Thyroid gland (tissue), 4 donors: ENCODE measurements at regions of chr7 and their contacts with region 1.

Region 1: DNA sequence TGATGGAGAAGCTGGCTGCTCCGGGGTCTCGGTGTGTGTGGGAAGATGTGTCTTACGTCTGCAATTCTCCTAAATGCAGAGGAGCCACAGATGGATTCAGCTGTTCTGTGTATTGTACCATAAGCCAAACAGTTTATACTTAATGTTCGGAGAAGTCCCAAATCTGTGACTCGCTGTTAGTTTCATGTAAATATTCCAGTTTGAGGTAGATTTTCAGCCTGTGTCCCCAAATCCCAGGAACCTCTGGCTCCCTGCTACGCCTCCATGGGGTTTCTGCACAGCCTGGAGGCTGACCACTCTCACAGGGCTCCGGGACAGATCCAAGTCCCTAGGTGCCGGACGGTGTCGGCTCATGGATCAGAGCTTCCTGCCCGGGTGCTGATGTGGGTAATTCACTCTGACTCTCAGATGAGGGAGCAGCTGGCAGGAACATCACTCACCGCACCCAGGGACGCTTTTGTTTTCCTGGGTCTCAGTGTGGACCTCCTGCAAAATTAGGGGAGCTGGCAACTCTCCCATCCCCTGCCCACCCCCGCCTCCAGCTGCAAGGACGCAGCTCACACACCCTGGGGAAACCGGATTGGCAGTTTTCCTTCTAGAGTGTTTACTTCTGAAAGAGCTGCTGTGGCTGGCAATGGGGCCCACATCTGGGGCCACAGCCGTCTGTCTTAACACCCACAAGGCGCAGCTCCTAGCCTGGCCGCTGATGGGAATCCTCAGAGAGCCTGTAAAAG is 421.1 kb upstream of the FOXK1 start:
- DNase-seq: no peak
- H3K4me3 ChIP-seq: no peak overlapping the region
- H3K27ac ChIP-seq: no peak overlapping the region
- H3K4me1 ChIP-seq: no peaks in the 10 kb centered on the region
- H3K27me3 ChIP-seq: no peaks in the 10 kb centered on the region
- CTCF ChIP-seq: no peak
- POLR2A ChIP-seq: no peak

Region 2: DNA sequence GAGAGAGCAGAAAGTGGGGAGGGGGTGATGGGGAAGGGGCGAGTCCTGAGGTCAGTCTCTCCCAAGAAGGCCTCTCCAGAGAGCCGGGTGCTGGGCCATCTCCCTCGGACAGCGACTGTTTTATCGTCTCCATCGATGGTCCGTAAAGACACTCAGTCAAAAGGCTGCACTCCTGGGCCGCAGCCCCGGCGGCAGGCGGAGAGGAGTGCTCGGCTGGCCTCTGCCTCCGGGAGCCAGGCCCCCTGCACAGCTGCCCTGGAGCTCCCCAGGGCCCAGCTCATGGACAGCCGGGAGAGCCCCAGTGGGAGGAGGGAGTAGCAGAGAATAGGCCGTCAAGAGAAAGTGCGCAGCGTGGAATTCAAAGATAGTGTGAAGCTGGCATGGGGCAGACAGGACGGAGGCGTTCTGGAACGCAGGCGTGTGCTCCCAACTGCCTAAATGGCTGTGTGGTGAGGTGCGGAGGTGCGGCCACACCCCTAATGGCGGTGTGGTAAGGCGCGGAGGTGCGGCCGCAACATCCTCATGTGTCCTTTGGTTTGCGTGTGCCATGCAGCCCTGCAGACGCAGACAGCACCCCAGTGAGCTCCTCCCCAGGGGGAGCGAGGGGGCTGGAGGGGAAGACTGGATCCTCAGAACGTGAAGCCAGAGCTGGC is 56.4 kb before region 1 on chr7:
- intact Hi-C with region 1: loop called (anchors 10 kb)
- DNase-seq: no peak
- H3K4me3 ChIP-seq: no peak overlapping the region
- H3K27ac ChIP-seq: no peak overlapping the region
- H3K4me1 ChIP-seq: no peaks in the 10 kb centered on the region
- H3K27me3 ChIP-seq: no peaks in the 10 kb centered on the region
- CTCF ChIP-seq: no peak
- POLR2A ChIP-seq: no peak